ENCODE measurements at regions of chr14 and their contacts with region 1.

Region 1: GRCh38 chr14:29558516-29558915 is 369.1 kb downstream of the PRKD1 start:
- DNase-seq: no peak
- H3K4me3 ChIP-seq: no peak overlapping the region
- H3K27ac ChIP-seq: no peak overlapping the region
- H3K4me1 ChIP-seq: no peaks in the 10 kb centered on the region
- H3K27me3 ChIP-seq: no peaks in the 10 kb centered on the region
- CTCF ChIP-seq: no peak

Region 2: GRCh38 chr14:29301571-29301970 is 256.9 kb before region 1 on chr14:
- CTCF ChIA-PET with region 1: no interaction called
- dilution Hi-C with region 1: no loop called
- in situ Hi-C with region 1: no loop called
- intact Hi-C with region 1: no loop called
- DNase-seq: no peak
- H3K4me3 ChIP-seq: no peak overlapping the region
- H3K27ac ChIP-seq: no peak overlapping the region
- H3K4me1 ChIP-seq: no peaks in the 10 kb centered on the region
- H3K27me3 ChIP-seq: no peaks in the 10 kb centered on the region
- CTCF ChIP-seq: no peak

Region 3: DNA sequence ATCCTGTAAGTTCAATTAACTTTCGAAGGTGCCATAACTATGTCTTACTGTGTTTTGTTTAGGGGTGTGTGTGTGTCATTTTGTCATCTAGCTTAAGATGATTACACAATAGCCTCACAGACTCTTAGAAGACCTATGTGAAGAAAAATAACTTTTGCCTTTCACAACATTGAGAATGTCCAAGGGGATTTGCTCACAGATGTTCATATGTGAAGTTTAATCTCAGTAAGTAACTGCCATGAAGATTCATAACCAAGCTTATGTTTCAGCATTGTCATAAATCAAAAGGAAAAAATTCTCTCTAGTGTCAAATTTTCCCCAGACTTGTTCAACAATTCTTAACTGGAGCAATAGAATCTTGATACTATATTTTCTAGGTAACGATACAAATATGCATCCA is 595.2 kb after region 1 on chr14:
- CTCF ChIA-PET with region 1: no interaction called
- dilution Hi-C with region 1: loop called (anchors 25 kb)
- in situ Hi-C with region 1: no loop called
- intact Hi-C with region 1: no loop called
- DNase-seq: no peak
- H3K4me3 ChIP-seq: no peak overlapping the region
- H3K27ac ChIP-seq: no peak overlapping the region
- H3K4me1 ChIP-seq: no peaks in the 10 kb centered on the region
- H3K27me3 ChIP-seq: no peaks in the 10 kb centered on the region
- CTCF ChIP-seq: no peak

Measured in mammary epithelial cell (primary cell).